Posterior vena cava (tissue), 2 donors: ENCODE measurements at regions of chr20 and their contacts with region 1.

Region 1: GRCh38 chr20:44388466-44389023 is 33.0 kb downstream of the HNF4A start:
- DNase-seq: peak; percentile 92

Region 2: GRCh38 chr20:44422083-44422482 is 33.5 kb after region 1 on chr20:
- intact Hi-C with region 1: no loop called
- DNase-seq: no peak

Region 3: DNA sequence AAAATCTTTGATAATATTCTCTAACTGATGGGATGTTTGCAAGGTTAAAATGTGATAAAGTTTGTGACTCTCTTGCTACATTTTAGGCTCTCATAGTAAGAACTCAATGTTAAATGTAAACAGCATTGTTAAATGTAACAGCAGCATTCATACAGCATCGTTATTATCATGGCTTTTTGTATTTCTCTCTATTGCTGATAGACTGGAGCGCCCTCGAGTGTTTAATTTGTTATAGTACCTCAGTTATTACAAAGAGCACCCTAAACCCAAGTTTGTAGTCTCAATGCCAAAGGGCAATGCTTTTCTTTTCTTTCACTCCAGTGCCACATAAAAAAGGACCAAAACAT is 72.2 kb after region 1 on chr20:
- intact Hi-C with region 1: no loop called
- DNase-seq: no peak

Region 4: GRCh38 chr20:44609511-44610312 is 221.2 kb after region 1 on chr20:
- intact Hi-C with region 1: loop called in 1 of 2 experiments (anchors 2 kb)
- DNase-seq: peak; percentile 96

Region 5: DNA sequence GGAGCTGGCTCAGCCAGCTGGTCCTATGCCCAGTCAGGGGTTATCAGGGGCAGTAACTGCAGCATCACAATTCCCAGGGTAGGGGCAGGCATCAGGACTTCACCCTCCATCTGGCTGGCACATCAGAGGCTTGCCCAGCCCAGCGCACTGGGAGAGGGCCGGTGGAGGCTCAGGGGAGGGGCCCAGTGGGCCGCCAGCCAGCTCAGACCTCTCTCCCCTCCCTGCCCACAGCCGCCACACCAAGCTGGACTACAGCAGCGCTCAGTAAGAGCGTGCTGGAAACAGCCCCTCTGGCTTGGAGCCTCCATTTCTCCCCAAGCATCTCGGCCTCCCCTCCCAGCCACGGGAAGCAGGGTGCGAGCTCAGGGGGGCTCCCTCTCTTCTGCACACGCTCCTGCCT is 241.0 kb after region 1 on chr20:
- intact Hi-C with region 1: loop called in 1 of 2 experiments (anchors 10 kb)
- DNase-seq: no peak